Activated naive CD8-positive, alpha-beta T cell treated with anti-CD3 and anti-CD28 coated beads, Interleukin-2, amount 10 ng/mL, durations not matched to agents 7 days and 5 days (primary cell): ENCODE measurements at regions of chr6 and their contacts with region 1.

Region 1: GRCh38 chr6:107763946-107764345 is 60.2 kb downstream of the SCML4 start:
- DNase-seq: no peak
- ATAC-seq: no peak
- H3K4me3 Mint-ChIP-seq: no peak overlapping the region
- H3K27ac Mint-ChIP-seq: no peak overlapping the region
- H3K4me1 Mint-ChIP-seq: peaks cover 3% of the 10 kb centered on the region
- H3K27me3 Mint-ChIP-seq: no peaks in the 10 kb centered on the region

Region 2: GRCh38 chr6:107753778-107754177 is 10.2 kb before region 1 on chr6:
- POLR2A ChIA-PET with region 1: interaction called, 10 read pairs
- DNase-seq: no peak
- ATAC-seq: no peak
- H3K4me3 Mint-ChIP-seq: no peak overlapping the region
- H3K27ac Mint-ChIP-seq: no peak overlapping the region
- H3K4me1 Mint-ChIP-seq: peaks cover 26% of the 10 kb centered on the region
- H3K27me3 Mint-ChIP-seq: no peaks in the 10 kb centered on the region